PC-3 (cell line): ENCODE measurements at regions of chr13 and their contacts with region 1.

Region 1: GRCh38 chr13:20945952-20946383 is 43.4 kb upstream of the XPO4 start:
- DNase-seq: no peak
- ATAC-seq: no peak
- H3K4me3 ChIP-seq: no peak overlapping the region
- H3K27ac ChIP-seq: no peak overlapping the region
- H3K4me1 ChIP-seq: peaks cover 6% of the 10 kb centered on the region
- H3K27me3 ChIP-seq: no peaks in the 10 kb centered on the region
- CTCF ChIP-seq: no peak

Region 2: DNA sequence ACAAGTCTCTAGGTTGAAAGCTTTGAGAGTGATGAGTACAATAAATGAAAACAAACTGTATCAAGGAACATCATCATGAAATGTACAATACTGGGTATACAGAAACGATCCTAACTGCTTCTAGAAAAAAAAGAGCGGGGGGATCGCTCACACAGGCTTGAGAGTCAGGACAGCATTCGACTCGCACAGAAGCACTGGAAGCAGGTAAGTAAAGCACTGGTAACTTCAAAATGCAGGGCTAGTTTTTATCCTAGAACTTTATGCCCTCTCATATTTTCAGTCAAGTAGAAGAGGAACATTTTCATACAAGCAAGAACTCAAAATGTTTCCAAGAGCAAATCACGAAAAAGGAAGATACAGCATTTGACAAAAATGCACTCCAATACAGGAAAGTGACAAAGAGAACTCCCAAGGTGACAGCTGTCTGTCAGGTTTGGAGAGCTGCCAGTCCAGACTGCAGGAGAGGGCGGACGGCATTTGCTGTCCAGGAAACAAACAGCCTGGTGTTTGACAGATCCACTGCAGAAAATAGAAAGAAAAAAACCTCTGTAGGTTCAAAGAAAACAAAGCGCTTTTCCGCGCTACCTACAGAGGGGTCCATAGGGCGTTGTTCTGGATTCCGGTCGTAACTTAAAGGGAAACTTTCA is 14.8 kb after region 1 on chr13:
- CTCF ChIA-PET with region 1: no interaction called
- POLR2A ChIA-PET with region 1: no interaction called
- intact Hi-C with region 1: no loop called
- DNase-seq: peak; percentile 44
- ATAC-seq: peak; percentile 46
- H3K4me3 ChIP-seq: peak overlapping the region; percentile 60
- H3K27ac ChIP-seq: no peak overlapping the region
- H3K4me1 ChIP-seq: no peaks in the 10 kb centered on the region
- H3K27me3 ChIP-seq: no peaks in the 10 kb centered on the region
- CTCF ChIP-seq: no peak

Region 3: GRCh38 chr13:21001471-21001870 is 55.5 kb after region 1 on chr13:
- CTCF ChIA-PET with region 1: no interaction called
- POLR2A ChIA-PET with region 1: no interaction called
- intact Hi-C with region 1: no loop called
- DNase-seq: no peak
- ATAC-seq: no peak
- H3K4me3 ChIP-seq: no peak overlapping the region
- H3K27ac ChIP-seq: no peak overlapping the region
- H3K4me1 ChIP-seq: no peaks in the 10 kb centered on the region
- H3K27me3 ChIP-seq: no peaks in the 10 kb centered on the region
- CTCF ChIP-seq: no peak

Region 4: GRCh38 chr13:21014502-21015170 is 68.7 kb after region 1 on chr13:
- CTCF ChIA-PET with region 1: interaction called, 3 read pairs
- POLR2A ChIA-PET with region 1: no interaction called
- intact Hi-C with region 1: loop called (anchors 1 kb)
- DNase-seq: peak; percentile 74
- ATAC-seq: peak; percentile 53
- H3K4me3 ChIP-seq: peak overlapping the region; percentile 43
- H3K27ac ChIP-seq: peak overlapping the region; percentile 97
- H3K4me1 ChIP-seq: peaks cover 48% of the 10 kb centered on the region
- H3K27me3 ChIP-seq: no peaks in the 10 kb centered on the region
- CTCF ChIP-seq: no peak

Region 5: DNA sequence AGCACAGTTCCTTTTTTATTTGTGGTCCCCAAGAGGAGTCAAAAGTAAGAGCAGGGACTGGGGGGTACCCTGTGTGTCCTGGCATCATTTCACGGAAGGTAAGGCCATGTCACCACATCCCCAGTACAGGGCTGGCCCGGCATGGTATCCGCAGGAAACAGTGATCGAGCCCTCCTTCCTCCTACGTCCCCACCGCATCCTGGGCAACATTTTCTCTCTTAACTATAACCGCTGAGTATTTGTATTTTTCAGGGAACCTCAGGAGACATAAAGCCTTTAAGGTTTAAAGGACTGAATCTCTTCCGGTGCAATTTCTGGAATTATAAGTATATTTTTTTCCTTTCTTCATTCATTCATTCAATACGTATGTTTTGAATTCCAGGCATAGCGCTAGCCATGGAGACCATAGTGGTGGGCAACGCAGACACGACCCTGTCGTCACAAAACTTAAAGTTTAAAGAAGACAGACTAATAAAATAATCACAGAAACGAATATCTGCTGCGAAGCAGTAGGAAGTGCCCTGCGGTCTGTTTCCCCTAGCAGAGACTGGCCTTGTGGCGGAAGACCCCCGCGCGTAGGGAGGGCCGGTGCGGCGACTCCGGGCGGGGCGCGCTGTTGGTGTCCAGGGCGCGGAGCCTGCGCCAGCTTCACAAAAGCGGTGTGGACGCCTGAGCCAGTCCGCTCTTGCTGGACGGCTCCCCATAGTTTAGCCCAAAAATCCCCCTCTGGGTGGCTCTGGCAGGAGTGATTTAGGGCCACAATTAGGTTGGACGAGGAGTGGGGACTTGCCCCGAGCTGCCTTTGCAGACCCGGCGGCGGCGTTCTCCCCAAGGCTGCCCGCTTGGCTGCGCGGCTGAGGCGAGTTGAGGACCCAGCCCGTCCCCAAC is 129.3 kb after region 1 on chr13:
- CTCF ChIA-PET with region 1: interaction called, 11 read pairs
- POLR2A ChIA-PET with region 1: interaction called, 3 read pairs
- intact Hi-C with region 1: no loop called
- DNase-seq: no peak
- ATAC-seq: peak; percentile 54
- H3K4me3 ChIP-seq: peak overlapping the region; percentile 69
- H3K27ac ChIP-seq: no peak overlapping the region
- H3K4me1 ChIP-seq: peaks cover 22% of the 10 kb centered on the region
- H3K27me3 ChIP-seq: no peaks in the 10 kb centered on the region
- CTCF ChIP-seq: no peak

Region 6: GRCh38 chr13:21137696-21138095 is 191.7 kb after region 1 on chr13:
- CTCF ChIA-PET with region 1: no interaction called
- POLR2A ChIA-PET with region 1: no interaction called
- intact Hi-C with region 1: loop called (anchors 1 kb)
- DNase-seq: peak; percentile 60
- ATAC-seq: no peak
- H3K4me3 ChIP-seq: no peak overlapping the region
- H3K27ac ChIP-seq: no peak overlapping the region
- H3K4me1 ChIP-seq: peaks cover 24% of the 10 kb centered on the region
- H3K27me3 ChIP-seq: no peaks in the 10 kb centered on the region
- CTCF ChIP-seq: no peak

Region 7: DNA sequence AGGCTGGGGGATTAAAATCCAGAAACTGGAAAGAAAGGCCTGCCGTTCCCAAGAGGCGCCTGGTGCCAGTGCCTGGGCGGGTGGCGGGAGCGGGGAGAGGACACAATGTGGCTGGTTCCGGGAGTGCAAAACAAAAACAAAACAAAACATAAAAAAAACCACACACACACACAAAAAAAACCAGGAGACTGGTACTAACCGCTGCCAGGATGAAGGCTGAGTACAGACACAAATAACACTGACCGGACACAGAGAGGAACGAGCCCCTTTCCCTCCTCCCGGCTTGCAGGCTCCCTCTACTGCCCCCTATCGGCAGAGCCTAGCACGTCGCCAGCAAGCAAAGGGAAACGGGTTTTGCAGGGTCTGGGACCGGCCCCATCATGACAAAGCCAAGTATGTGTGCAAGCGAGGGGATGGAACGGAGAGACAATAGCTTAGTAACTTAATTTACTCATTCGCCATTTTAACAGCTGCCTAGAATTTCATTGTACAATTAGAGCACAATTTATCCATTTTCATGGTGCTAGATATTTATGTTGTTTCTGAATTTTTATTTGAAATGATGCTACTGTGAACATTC is 531.0 kb after region 1 on chr13:
- CTCF ChIA-PET with region 1: no interaction called
- POLR2A ChIA-PET with region 1: no interaction called
- intact Hi-C with region 1: loop called (anchors 2 kb)
- DNase-seq: peak; percentile 85
- ATAC-seq: peak; percentile 68
- H3K4me3 ChIP-seq: peak overlapping the region; percentile 58
- H3K27ac ChIP-seq: no peak overlapping the region
- H3K4me1 ChIP-seq: peaks cover 6% of the 10 kb centered on the region
- H3K27me3 ChIP-seq: no peaks in the 10 kb centered on the region
- CTCF ChIP-seq: peak; percentile 86